CD14-positive monocyte (primary cell): ENCODE measurements at regions of chr5 and their contacts with region 1.

Region 1: GRCh38 chr5:150129813-150130492 is 25.7 kb downstream of the PDGFRB start:
- DNase-seq: peak; percentile 69 to 81 (median 75)
- H3K4me3 ChIP-seq: no peak overlapping the region
- H3K4me3 Mint-ChIP-seq: peak overlapping the region in 1 of 2 donors; percentile 35
- H3K27ac ChIP-seq: no peak overlapping the region
- H3K27ac Mint-ChIP-seq: peak overlapping the region in 3 of 7 donors; percentile 49 to 90 (median 64)
- H3K4me1 ChIP-seq: peaks cover 24 to 36% of the 10 kb centered on the region in 2 donors
- H3K4me1 Mint-ChIP-seq: peaks cover 42% of the 10 kb centered on the region
- H3K27me3 ChIP-seq: no peaks in the 10 kb centered on the region
- H3K27me3 Mint-ChIP-seq: peaks cover 2 to 3% (median 2%) of the 10 kb centered on the region in 3 donors
- CTCF ChIP-seq: peak; percentile 94

Region 2: GRCh38 chr5:150172145-150172544 is 42.2 kb after region 1 on chr5:
- intact Hi-C with region 1: loop called in 1 of 2 experiments (anchors 5 kb)
- DNase-seq: no peak
- H3K4me3 ChIP-seq: no peak overlapping the region
- H3K4me3 Mint-ChIP-seq: no peak overlapping the region
- H3K27ac ChIP-seq: no peak overlapping the region
- H3K27ac Mint-ChIP-seq: no peak overlapping the region
- H3K4me1 ChIP-seq: no peaks in the 10 kb centered on the region
- H3K4me1 Mint-ChIP-seq: peaks cover 4% of the 10 kb centered on the region
- H3K27me3 ChIP-seq: peaks cover 28 to 38% of the 10 kb centered on the region in 2 donors
- H3K27me3 Mint-ChIP-seq: peaks cover 32 to 39% (median 34%) of the 10 kb centered on the region in 3 donors
- CTCF ChIP-seq: no peak

Region 3: DNA sequence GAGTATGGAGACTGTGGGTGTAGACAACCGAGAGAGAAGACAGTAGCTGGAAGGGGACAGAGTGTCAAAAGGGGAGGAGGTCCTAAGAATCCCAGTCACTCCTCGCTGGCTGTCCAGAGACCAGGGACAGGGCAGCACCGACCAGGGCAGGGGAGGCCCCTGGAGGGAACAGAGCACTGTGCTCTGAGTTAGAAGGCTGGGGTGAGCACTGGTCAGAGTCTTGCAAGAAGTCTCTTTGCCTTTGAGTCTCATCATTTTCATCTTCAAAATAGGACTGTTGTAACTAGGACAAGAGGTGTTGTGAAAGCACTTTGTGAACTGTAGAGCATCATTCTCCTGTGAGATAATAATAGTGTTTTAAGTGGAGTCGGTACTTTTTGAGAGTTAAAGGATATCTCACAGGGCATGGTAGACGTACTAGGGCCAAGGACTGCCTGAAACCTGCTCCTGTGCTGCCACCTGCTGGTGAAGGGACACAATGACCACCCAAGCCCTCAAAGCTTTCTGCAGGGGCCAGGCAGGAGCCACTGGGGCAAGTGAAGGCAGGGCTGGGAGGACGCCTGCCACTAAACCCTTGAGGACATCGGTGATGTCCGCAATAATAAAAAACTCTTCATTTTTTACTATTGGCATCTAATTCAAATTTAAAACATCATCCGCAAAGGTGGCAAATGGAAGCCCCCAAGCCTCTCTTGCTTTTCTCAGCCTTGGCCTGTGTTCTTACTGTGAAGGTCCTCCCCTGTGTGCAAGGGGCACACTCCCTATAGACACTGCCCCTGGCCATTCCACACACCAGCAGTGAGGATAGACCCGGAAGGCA is 88.1 kb after region 1 on chr5:
- intact Hi-C with region 1: loop called (anchors 1 to 2 kb)
- DNase-seq: peak; percentile 74 to 82 (median 79)
- H3K4me3 ChIP-seq: no peak overlapping the region
- H3K4me3 Mint-ChIP-seq: peak overlapping the region in 1 of 2 donors; percentile 44
- H3K27ac ChIP-seq: no peak overlapping the region
- H3K27ac Mint-ChIP-seq: peak overlapping the region in 1 of 7 donors; percentile 16
- H3K4me1 ChIP-seq: no peaks in the 10 kb centered on the region
- H3K4me1 Mint-ChIP-seq: peaks cover 7% of the 10 kb centered on the region
- H3K27me3 ChIP-seq: no peaks in the 10 kb centered on the region
- H3K27me3 Mint-ChIP-seq: peaks cover 8 to 17% (median 15%) of the 10 kb centered on the region in 3 donors
- CTCF ChIP-seq: peak; percentile 93

Region 4: GRCh38 chr5:150340614-150341255 is 210.8 kb after region 1 on chr5:
- intact Hi-C with region 1: loop called in 1 of 2 experiments (anchors 10 kb)
- DNase-seq: no peak
- H3K4me3 ChIP-seq: no peak overlapping the region
- H3K4me3 Mint-ChIP-seq: no peak overlapping the region
- H3K27ac ChIP-seq: no peak overlapping the region
- H3K27ac Mint-ChIP-seq: no peak overlapping the region
- H3K4me1 ChIP-seq: no peaks in the 10 kb centered on the region
- H3K4me1 Mint-ChIP-seq: peaks cover 6% of the 10 kb centered on the region
- H3K27me3 ChIP-seq: no peaks in the 10 kb centered on the region
- H3K27me3 Mint-ChIP-seq: peaks cover 2 to 4% (median 3%) of the 10 kb centered on the region in 3 donors
- CTCF ChIP-seq: no peak